Endothelial cell of umbilical vein (primary cell): ENCODE measurements at regions of chr12 and their contacts with region 1.

Region 1: DNA sequence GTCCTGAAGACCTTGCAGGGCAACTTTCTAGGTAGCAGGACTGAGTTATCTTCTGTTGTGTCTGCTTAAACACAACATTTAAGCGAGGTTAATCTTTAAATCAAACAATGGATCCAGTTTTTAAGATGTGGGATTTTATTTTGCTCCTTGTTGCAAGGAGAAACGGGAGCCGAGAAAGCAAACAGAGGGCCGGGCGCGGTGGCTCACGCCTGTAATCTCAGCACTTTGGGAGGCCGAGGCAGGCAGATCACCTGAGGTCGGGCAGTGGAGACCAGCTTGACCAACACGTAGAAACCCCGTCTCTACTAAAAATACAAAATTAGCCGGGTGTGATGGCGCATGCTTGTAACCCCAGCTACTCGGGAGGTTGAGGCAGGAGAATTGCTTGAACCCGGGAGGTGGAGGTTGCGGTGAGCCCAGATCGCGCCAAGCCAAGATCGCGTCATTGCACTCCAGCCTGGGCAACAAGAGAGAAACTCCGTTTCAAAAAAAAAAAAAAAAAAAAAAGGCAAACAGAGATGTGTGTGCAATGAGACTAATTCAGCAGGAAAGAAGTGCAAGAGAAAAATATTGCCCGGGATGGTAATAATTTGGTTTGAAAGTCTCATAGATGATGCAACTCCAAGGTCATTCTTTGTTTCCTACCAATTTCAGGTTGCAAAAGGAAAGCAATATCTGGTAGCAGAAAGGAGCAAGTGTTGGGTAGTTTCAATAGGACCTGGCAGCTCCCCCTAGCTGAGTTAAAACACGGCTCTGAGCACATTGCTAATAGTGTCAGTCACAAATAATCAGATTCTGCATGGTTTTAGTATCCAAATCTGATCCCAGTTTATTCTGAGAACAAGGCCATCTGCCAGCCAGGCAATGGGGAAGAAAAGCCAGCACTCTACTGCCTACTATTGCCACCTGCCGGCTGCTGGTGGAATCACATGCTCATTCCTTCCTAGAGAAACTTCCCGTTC is 141.4 kb downstream of the PPM1H start:
- DNase-seq: peak; percentile 91
- H3K4me3 ChIP-seq: no peak overlapping the region
- H3K27ac ChIP-seq: no peak overlapping the region
- H3K4me1 ChIP-seq: peaks cover 16% of the 10 kb centered on the region
- H3K27me3 ChIP-seq: no peaks in the 10 kb centered on the region
- CTCF ChIP-seq: peak; percentile 87 to 92
- POLR2A ChIP-seq: no peak

Region 2: GRCh38 chr12:62435303-62436163 is 358.0 kb before region 1 on chr12:
- CTCF ChIA-PET with region 1: interaction called, 258 read pairs
- POLR2A ChIA-PET with region 1: no interaction called
- dilution Hi-C with region 1: no loop called
- intact Hi-C with region 1: loop called (anchors 1 kb)
- DNase-seq: peak; percentile 52
- H3K4me3 ChIP-seq: peak overlapping the region; percentile 4 to 51 (median 23)
- H3K27ac ChIP-seq: no peak overlapping the region
- H3K4me1 ChIP-seq: peaks cover 9% of the 10 kb centered on the region
- H3K27me3 ChIP-seq: peaks cover 12 to 30% of the 10 kb centered on the region in 2 experiments
- CTCF ChIP-seq: peak; percentile 37 to 78
- POLR2A ChIP-seq: no peak

Region 3: GRCh38 chr12:62575036-62575435 is 218.5 kb before region 1 on chr12:
- CTCF ChIA-PET with region 1: interaction called, 13 read pairs
- POLR2A ChIA-PET with region 1: no interaction called
- dilution Hi-C with region 1: no loop called
- intact Hi-C with region 1: no loop called
- DNase-seq: no peak
- H3K4me3 ChIP-seq: no peak overlapping the region
- H3K27ac ChIP-seq: no peak overlapping the region
- H3K4me1 ChIP-seq: no peaks in the 10 kb centered on the region
- H3K27me3 ChIP-seq: no peaks in the 10 kb centered on the region
- CTCF ChIP-seq: no peak
- POLR2A ChIP-seq: no peak

Region 4: GRCh38 chr12:62625228-62625627 is 168.3 kb before region 1 on chr12:
- CTCF ChIA-PET with region 1: interaction called, 13 read pairs
- POLR2A ChIA-PET with region 1: no interaction called
- dilution Hi-C with region 1: loop called (anchors 25 kb)
- intact Hi-C with region 1: no loop called
- DNase-seq: no peak
- H3K4me3 ChIP-seq: no peak overlapping the region
- H3K27ac ChIP-seq: no peak overlapping the region
- H3K4me1 ChIP-seq: no peaks in the 10 kb centered on the region
- H3K27me3 ChIP-seq: no peaks in the 10 kb centered on the region
- CTCF ChIP-seq: no peak
- POLR2A ChIP-seq: no peak

Region 5: DNA sequence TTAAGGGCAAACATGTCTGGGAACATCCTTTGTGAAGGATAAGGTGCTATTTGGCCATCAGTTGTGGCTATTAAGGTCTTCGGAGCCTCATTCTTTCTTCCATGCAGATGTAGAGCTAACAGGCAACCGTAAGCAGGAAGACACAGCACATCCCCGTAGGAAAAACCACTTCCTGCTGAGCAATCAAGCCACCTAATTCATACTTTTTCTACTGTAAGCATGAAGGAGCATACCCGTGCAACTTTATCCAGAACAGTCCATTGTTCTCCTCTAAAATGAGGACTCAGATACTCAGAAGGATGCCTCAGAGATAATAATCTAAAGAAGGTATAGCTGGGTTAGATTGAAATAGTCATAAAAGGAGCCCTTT is 90.5 kb before region 1 on chr12:
- CTCF ChIA-PET with region 1: interaction called, 12 read pairs
- POLR2A ChIA-PET with region 1: no interaction called
- dilution Hi-C with region 1: no loop called
- intact Hi-C with region 1: no loop called
- DNase-seq: peak; percentile 59
- H3K4me3 ChIP-seq: no peak overlapping the region
- H3K27ac ChIP-seq: peak overlapping the region; percentile 57
- H3K4me1 ChIP-seq: peaks cover 35% of the 10 kb centered on the region
- H3K27me3 ChIP-seq: no peaks in the 10 kb centered on the region
- CTCF ChIP-seq: no peak
- POLR2A ChIP-seq: no peak

Region 6: DNA sequence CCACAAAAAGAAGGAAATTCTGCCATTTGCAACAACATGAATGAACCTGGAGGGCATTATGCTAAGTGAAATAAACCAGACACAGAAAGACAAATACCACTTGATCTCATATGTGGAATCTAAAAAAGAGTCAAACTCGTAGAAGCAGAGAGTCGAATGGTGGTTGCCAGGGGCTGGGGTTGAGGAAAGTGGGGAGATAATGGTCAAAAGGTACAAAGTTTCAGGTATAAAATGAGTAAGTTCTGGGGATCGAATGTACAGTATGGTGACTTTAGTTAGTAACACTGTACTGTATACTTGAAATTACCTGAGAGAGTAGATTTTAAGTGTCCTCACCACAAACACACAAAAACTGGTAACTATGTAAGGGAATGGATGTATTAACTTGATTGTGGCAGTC is 12.0 kb after region 1 on chr12:
- CTCF ChIA-PET with region 1: no interaction called
- POLR2A ChIA-PET with region 1: no interaction called
- dilution Hi-C with region 1: no loop called
- intact Hi-C with region 1: no loop called
- DNase-seq: no peak
- H3K4me3 ChIP-seq: no peak overlapping the region
- H3K27ac ChIP-seq: no peak overlapping the region
- H3K4me1 ChIP-seq: no peaks in the 10 kb centered on the region
- H3K27me3 ChIP-seq: no peaks in the 10 kb centered on the region
- CTCF ChIP-seq: no peak
- POLR2A ChIP-seq: no peak

Region 7: DNA sequence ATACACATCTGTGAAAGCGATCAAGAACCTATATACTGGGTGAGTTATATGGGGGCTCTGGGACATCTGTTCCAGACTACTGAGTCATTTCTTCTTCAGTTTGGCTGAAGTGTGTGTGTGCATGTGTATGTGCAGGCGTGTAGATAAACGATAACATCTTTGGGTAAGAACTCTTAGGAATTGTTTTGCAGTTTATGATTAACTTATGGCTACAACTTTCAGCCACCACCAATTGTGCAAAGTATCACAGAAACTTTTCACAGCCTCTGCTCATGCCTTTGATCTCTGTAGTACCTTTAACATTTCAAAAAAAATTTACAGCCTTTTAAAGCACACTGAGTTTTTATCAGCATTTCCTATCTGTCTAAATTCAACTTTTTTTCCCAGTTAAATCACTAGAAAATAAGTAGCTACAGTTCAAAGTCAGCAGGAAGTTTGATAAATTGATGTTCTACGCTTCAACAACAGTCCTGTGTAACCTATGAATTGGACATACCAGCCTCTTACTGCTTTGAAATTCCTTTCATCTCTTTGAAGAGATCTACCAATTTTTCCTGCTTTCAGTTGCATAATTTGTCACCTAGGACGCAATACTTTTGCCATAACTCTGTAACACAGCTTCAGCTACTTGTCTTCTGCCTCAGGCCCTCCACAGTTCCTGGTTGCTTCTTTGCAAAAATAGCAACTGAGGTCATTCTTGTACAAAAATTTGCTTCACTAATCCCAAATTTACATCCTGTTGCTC is 98.4 kb after region 1 on chr12:
- CTCF ChIA-PET with region 1: no interaction called
- POLR2A ChIA-PET with region 1: no interaction called
- dilution Hi-C with region 1: no loop called
- intact Hi-C with region 1: no loop called
- DNase-seq: no peak
- H3K4me3 ChIP-seq: no peak overlapping the region
- H3K27ac ChIP-seq: no peak overlapping the region
- H3K4me1 ChIP-seq: no peaks in the 10 kb centered on the region
- H3K27me3 ChIP-seq: no peaks in the 10 kb centered on the region
- CTCF ChIP-seq: no peak
- POLR2A ChIP-seq: no peak

Region 8: GRCh38 chr12:64767495-64767894 is 1974.0 kb after region 1 on chr12:
- CTCF ChIA-PET with region 1: no interaction called
- POLR2A ChIA-PET with region 1: no interaction called
- dilution Hi-C with region 1: no loop called
- intact Hi-C with region 1: no loop called
- DNase-seq: no peak
- H3K4me3 ChIP-seq: no peak overlapping the region
- H3K27ac ChIP-seq: no peak overlapping the region
- H3K4me1 ChIP-seq: no peaks in the 10 kb centered on the region
- H3K27me3 ChIP-seq: peaks cover 0 to 2% of the 10 kb centered on the region in 2 experiments
- CTCF ChIP-seq: no peak
- POLR2A ChIP-seq: no peak